ENCODE measurements at regions of chr3 and their contacts with region 1.

Region 1: GRCh38 chr3:159616212-159616825 is 372.3 kb upstream of the IL12A start:
- DNase-seq: peak; percentile 75
- H3K4me3 ChIP-seq: no peak overlapping the region
- H3K27ac ChIP-seq: no peak overlapping the region
- H3K4me1 ChIP-seq: peaks cover 21% of the 10 kb centered on the region
- H3K27me3 ChIP-seq: no peaks in the 10 kb centered on the region

Region 2: DNA sequence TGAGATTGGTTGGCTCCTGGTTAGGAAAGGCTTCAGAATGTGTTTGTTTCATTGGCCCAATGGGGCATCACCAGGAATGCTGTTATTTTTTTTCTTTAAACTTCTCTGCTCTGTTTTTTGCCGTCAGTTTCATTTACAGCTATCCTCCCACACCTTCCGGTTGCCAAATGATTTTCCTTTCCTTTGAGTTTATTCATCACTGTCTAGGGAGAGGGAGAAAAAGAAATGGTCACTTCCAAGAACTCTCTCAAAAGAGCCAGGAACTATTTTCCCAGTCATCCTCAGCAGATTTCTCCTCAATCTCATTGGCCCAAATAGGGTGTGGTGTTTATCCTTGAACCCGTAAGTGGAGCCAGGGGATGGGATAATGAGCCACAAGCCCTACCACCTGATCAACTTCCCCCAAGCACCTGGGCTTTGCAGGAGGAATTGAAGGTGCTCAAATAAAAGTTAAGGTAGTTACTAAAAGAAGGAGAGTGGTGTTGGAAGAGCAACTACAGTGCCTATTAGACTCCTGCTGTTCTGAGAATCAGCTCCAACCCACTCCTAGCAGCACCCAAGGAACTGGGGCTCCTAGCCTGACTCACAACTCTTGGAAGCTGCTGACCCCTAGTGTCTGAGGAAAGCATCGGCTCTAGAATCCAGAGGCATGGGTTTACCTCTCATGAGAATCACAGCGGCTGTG is 188.5 kb after region 1 on chr3:
- in situ Hi-C with region 1: loop called (anchors 10 kb)
- DNase-seq: peak; percentile 94
- H3K4me3 ChIP-seq: peak overlapping the region; percentile 25
- H3K27ac ChIP-seq: peak overlapping the region; percentile 50
- H3K4me1 ChIP-seq: peaks cover 31% of the 10 kb centered on the region
- H3K27me3 ChIP-seq: no peaks in the 10 kb centered on the region

Region 3: GRCh38 chr3:160003520-160004128 is 387.3 kb after region 1 on chr3:
- in situ Hi-C with region 1: loop called (anchors 25 kb)
- DNase-seq: peak; percentile 64
- H3K4me3 ChIP-seq: no peak overlapping the region
- H3K27ac ChIP-seq: no peak overlapping the region
- H3K4me1 ChIP-seq: no peaks in the 10 kb centered on the region
- H3K27me3 ChIP-seq: no peaks in the 10 kb centered on the region

Measured in GM23248 (cell line).